ENCODE measurements at regions of chr2 and their contacts with region 1.

Region 1: DNA sequence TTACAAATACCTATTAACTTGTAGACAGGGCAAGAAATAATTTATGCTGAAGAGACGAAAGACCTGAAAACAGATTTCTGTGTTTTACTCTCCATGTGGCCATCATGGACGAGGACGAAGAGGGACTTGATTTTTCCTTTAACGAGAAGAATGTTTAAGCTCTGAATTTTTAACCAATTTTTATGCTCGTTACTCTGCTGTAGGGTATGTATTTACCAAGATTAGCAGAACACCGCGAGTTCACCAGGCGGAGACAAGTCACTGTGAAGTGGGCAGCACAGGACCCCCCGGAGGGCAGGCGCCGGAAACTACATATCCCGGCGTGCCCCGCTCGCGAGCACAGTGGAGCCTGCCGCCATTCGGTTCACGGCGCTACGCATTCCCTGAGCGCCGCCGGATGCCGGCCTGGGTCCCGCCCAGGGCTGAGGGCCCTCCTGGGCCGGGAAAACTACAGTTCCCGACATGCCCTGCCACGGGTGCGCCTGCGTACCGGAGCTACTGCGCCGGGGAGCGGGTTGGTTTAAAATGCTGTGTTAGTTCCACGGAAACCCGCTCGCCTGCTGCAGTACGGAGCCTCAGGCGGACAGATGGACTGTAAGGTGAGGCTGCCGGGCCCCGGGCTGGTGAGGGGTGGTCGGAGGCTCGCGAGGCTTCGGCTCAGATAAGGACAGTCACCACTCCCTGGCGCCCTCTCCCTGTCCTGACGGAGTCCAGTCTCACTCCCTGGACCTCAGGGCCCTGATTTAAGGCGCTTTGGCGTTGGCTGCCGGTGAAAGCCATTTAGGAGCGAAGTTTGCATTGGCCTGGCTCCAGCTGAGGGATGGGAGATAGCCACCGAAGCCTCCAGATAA is at the start of gene CCDC150:
- DNase-seq: peak; percentile 95 to 97
- H3K4me3 ChIP-seq: peak within 1 kb of the TSS; percentile 77
- H3K4me3 Mint-ChIP-seq: peak within 1 kb of the TSS; percentile 73
- H3K27ac Mint-ChIP-seq: peak within 1 kb of the TSS; percentile 67
- H3K4me1 ChIP-seq: peaks cover 4% of the 10 kb centered on the region; the same call in 1 of the 2 replicates
- H3K4me1 Mint-ChIP-seq: peaks cover 25% of the 10 kb centered on the region
- H3K27me3 ChIP-seq: no peaks in the 10 kb centered on the region
- H3K27me3 Mint-ChIP-seq: no peaks in the 10 kb centered on the region
- CTCF ChIP-seq: no peak
- total RNA-seq, gene CCDC150: 26.3 and 34.0 TPM in 2 replicates

Region 2: GRCh38 chr2:196528486-196529223 is 110.8 kb before region 1 on chr2:
- CTCF ChIA-PET with region 1: no interaction called
- POLR2A ChIA-PET with region 1: no interaction called
- intact Hi-C with region 1: loop called (anchors 2 kb)
- DNase-seq: no peak
- H3K4me3 ChIP-seq: no peak overlapping the region
- H3K4me3 Mint-ChIP-seq: no peak overlapping the region
- H3K27ac Mint-ChIP-seq: no peak overlapping the region
- H3K4me1 ChIP-seq: no peaks in the 10 kb centered on the region
- H3K4me1 Mint-ChIP-seq: no peaks in the 10 kb centered on the region
- H3K27me3 ChIP-seq: no peaks in the 10 kb centered on the region
- H3K27me3 Mint-ChIP-seq: peaks cover 4% of the 10 kb centered on the region
- CTCF ChIP-seq: no peak

Region 3: GRCh38 chr2:196592912-196593881 is 46.2 kb before region 1 on chr2:
- CTCF ChIA-PET with region 1: no interaction called
- POLR2A ChIA-PET with region 1: no interaction called
- intact Hi-C with region 1: loop called (anchors 2 kb)
- DNase-seq: peak; percentile 37 to 48
- H3K4me3 ChIP-seq: peak within 1 kb of the TSS; percentile 74
- H3K4me3 Mint-ChIP-seq: peak within 1 kb of the TSS; percentile 76
- H3K27ac Mint-ChIP-seq: no peak within 1 kb of the TSS
- H3K4me1 ChIP-seq: peaks cover 8% of the 10 kb centered on the region; the same call in 1 of the 2 replicates
- H3K4me1 Mint-ChIP-seq: peaks cover 8% of the 10 kb centered on the region
- H3K27me3 ChIP-seq: peaks cover 2% of the 10 kb centered on the region
- H3K27me3 Mint-ChIP-seq: peaks cover 32% of the 10 kb centered on the region
- CTCF ChIP-seq: no peak

Region 4: GRCh38 chr2:196750982-196751635 is 111.7 kb after region 1 on chr2:
- CTCF ChIA-PET with region 1: no interaction called
- POLR2A ChIA-PET with region 1: no interaction called
- intact Hi-C with region 1: loop called (anchors 2 kb)
- DNase-seq: peak; percentile 66 to 68
- H3K4me3 ChIP-seq: no peak overlapping the region
- H3K4me3 Mint-ChIP-seq: no peak overlapping the region
- H3K27ac Mint-ChIP-seq: peak overlapping the region; percentile 53
- H3K4me1 ChIP-seq: peaks cover 23% of the 10 kb centered on the region
- H3K4me1 Mint-ChIP-seq: peaks cover 14% of the 10 kb centered on the region
- H3K27me3 ChIP-seq: no peaks in the 10 kb centered on the region
- H3K27me3 Mint-ChIP-seq: no peaks in the 10 kb centered on the region
- CTCF ChIP-seq: peak; percentile 63 to 78

Region 5: GRCh38 chr2:196926562-196927375 is 287.4 kb after region 1 on chr2 and contains the start of gene PGAP1:
- CTCF ChIA-PET with region 1: no interaction called
- POLR2A ChIA-PET with region 1: no interaction called
- intact Hi-C with region 1: loop called (anchors 10 kb)
- DNase-seq: peak; percentile 87 to 93
- H3K4me3 ChIP-seq: peak within 1 kb of the TSS; percentile 85
- H3K4me3 Mint-ChIP-seq: peak within 1 kb of the TSS; percentile 97
- H3K27ac Mint-ChIP-seq: peak within 1 kb of the TSS; percentile 77
- H3K4me1 ChIP-seq: peaks cover 6% of the 10 kb centered on the region
- H3K4me1 Mint-ChIP-seq: peaks cover 7% of the 10 kb centered on the region
- H3K27me3 ChIP-seq: no peaks in the 10 kb centered on the region
- H3K27me3 Mint-ChIP-seq: peaks cover 4% of the 10 kb centered on the region
- CTCF ChIP-seq: no peak
- total RNA-seq, gene PGAP1: 5.6 and 6.4 TPM in 2 replicates

Region 6: GRCh38 chr2:197097578-197098366 is 458.4 kb after region 1 on chr2:
- CTCF ChIA-PET with region 1: no interaction called
- POLR2A ChIA-PET with region 1: no interaction called
- intact Hi-C with region 1: no loop called
- DNase-seq: no peak
- H3K4me3 ChIP-seq: no peak overlapping the region
- H3K4me3 Mint-ChIP-seq: no peak overlapping the region
- H3K27ac Mint-ChIP-seq: no peak overlapping the region
- H3K4me1 ChIP-seq: no peaks in the 10 kb centered on the region
- H3K4me1 Mint-ChIP-seq: no peaks in the 10 kb centered on the region
- H3K27me3 ChIP-seq: no peaks in the 10 kb centered on the region
- H3K27me3 Mint-ChIP-seq: peaks cover 11% of the 10 kb centered on the region
- CTCF ChIP-seq: no peak